ENCODE measurements at regions of chr3 and their contacts with region 1.

Region 1: DNA sequence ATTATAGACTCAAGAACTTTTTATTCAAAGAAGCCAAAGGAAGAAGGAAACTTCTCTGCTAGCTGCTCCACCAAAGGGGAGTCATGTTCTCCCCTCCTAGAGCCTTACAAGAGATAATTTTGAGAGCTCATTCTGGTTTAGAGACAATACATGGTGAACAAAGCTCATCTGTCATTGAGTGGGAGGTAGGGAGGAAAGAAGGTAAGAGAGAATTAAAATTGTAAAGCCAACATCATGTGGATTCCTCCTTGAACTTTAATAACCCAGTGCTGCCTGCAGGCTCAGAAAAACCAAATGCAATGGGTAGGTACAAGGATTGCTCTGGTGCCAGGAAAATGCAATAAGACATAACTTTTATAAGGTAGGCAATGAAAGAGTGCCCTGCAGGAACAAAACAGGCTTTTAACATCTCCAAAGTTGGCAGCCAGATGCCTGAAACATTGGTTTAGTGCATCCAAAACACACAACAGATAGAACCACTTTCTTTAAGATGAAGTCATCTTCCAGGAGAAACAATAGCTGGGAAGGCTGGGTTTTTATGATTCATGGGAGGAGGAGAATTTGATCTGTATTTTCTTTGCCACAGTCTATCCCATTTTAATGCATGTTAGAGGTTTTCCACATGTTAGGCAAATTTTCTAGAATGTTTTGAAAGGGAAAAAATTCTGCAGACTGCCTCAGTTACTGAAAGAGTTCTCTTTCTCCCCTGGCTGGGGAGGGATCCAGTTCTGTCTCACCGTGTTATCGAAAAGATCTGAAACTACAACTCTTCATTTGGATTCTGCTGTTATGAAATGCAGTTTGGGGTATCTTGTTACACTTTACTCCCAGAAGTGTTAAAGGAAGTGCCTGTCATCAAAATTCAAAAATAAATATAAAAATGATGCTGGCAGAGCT is 11.3 kb upstream of the ARHGEF3 start:
- DNase-seq: no peak
- ATAC-seq: no peak
- H3K4me3 Mint-ChIP-seq: no peak overlapping the region
- H3K27ac Mint-ChIP-seq: peak overlapping the region; percentile 67
- H3K4me1 Mint-ChIP-seq: peaks cover 63% of the 10 kb centered on the region
- H3K27me3 Mint-ChIP-seq: no peaks in the 10 kb centered on the region
- CTCF ChIP-seq: no peak

Region 2: DNA sequence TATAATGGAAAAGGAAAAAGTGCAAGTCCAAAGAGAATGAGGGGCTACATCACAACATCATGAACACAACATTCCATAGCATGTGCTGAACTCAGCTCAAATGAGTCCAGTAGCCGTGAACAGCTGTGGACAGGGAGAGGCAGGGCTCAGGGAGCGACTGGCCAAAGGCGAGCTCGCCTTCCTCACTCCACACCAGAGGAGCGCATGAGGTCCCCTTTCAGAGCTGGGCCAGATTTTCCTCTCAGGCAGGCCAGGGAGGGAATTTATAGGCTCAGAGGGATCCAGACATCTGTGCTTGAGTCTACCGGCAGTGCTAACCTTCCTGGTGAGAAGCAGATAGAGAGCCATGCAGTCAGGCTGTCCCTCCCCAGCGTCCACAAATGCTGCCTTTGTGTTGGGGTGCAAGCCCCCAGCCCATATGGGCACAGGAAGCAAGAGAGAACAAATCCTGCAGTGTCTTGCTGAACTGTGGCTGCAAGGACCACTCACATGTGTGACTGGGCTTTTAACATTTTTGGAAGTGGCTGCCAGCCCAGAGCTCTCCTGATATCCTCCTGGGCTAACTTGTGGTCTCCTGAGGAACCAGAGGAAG is 43.8 kb before region 1 on chr3:
- CTCF ChIA-PET with region 1: no interaction called
- POLR2A ChIA-PET with region 1: no interaction called
- intact Hi-C with region 1: no loop called
- DNase-seq: no peak
- ATAC-seq: no peak
- H3K4me3 Mint-ChIP-seq: no peak overlapping the region
- H3K27ac Mint-ChIP-seq: peak overlapping the region; percentile 48
- H3K4me1 Mint-ChIP-seq: peaks cover 67% of the 10 kb centered on the region
- H3K27me3 Mint-ChIP-seq: no peaks in the 10 kb centered on the region
- CTCF ChIP-seq: no peak

Region 3: GRCh38 chr3:56825567-56826438 is 12.8 kb after region 1 on chr3:
- CTCF ChIA-PET with region 1: interaction called, 11 read pairs
- POLR2A ChIA-PET with region 1: interaction called, 5 read pairs
- intact Hi-C with region 1: no loop called
- DNase-seq: no peak
- ATAC-seq: no peak
- H3K4me3 Mint-ChIP-seq: no peak overlapping the region
- H3K27ac Mint-ChIP-seq: no peak overlapping the region
- H3K4me1 Mint-ChIP-seq: peaks cover 44% of the 10 kb centered on the region
- H3K27me3 Mint-ChIP-seq: no peaks in the 10 kb centered on the region
- CTCF ChIP-seq: no peak